K562 (cell line): ENCODE measurements at regions of chr15 and their contacts with region 1.

Region 1: GRCh38 chr15:41557673-41558399 is 1.2 kb upstream of the TYRO3 start:
- DNase-seq: peak; percentile 79 to 84 (median 81)
- ATAC-seq: peak; percentile 77
- H3K4me3 ChIP-seq: peak overlapping the region; percentile 81
- H3K27ac ChIP-seq: 0 out of 3 replicates have a peak overlapping the region, but pooled peaks have one; percentile 12
- H3K4me1 ChIP-seq: peaks cover 38 to 53% of the 10 kb centered on the region in 2 experiments
- H3K27me3 ChIP-seq: no peaks in the 10 kb centered on the region
- CTCF ChIP-seq: peak; percentile 90 to 96 (median 91)
- EP300 ChIP-seq: 0 out of 2 replicates have a peak, but pooled peaks have one; percentile 6
- POLR2A ChIP-seq: no peak
- RAD21 ChIP-seq: peak; percentile 76 to 79

Region 2: GRCh38 chr15:41465822-41466421 is 91.9 kb before region 1 on chr15:
- CTCF ChIA-PET with region 1: no interaction called
- POLR2A ChIA-PET with region 1: interaction called, 6 read pairs
- in situ Hi-C with region 1: no loop called
- intact Hi-C with region 1: loop called (anchors 2 kb)
- DNase-seq: peak; percentile 39 to 69 (median 48)
- ATAC-seq: peak; percentile 89
- H3K4me3 ChIP-seq: no peak overlapping the region
- H3K27ac ChIP-seq: no peak overlapping the region
- H3K4me1 ChIP-seq: no peaks in the 10 kb centered on the region
- H3K27me3 ChIP-seq: no peaks in the 10 kb centered on the region
- CTCF ChIP-seq: peak; percentile 72 to 98 (median 92)
- EP300 ChIP-seq: no peak
- POLR2A ChIP-seq: no peak
- RAD21 ChIP-seq: peak; percentile 90 to 97

Region 3: GRCh38 chr15:41570764-41571163 is 12.9 kb after region 1 on chr15:
- CTCF ChIA-PET with region 1: no interaction called
- POLR2A ChIA-PET with region 1: interaction called, 16 read pairs
- in situ Hi-C with region 1: no loop called
- intact Hi-C with region 1: no loop called
- DNase-seq: no peak
- ATAC-seq: no peak
- H3K4me3 ChIP-seq: no peak overlapping the region
- H3K27ac ChIP-seq: no peak overlapping the region
- H3K4me1 ChIP-seq: peaks cover 30 to 31% of the 10 kb centered on the region in 2 experiments
- H3K27me3 ChIP-seq: no peaks in the 10 kb centered on the region
- CTCF ChIP-seq: no peak
- EP300 ChIP-seq: no peak
- POLR2A ChIP-seq: no peak
- RAD21 ChIP-seq: no peak

Region 4: GRCh38 chr15:41585127-41586047 is 27.6 kb after region 1 on chr15:
- CTCF ChIA-PET with region 1: interaction called, 4 read pairs
- POLR2A ChIA-PET with region 1: interaction called, 3 read pairs
- in situ Hi-C with region 1: no loop called
- intact Hi-C with region 1: loop called (anchors 2 kb)
- DNase-seq: no peak
- ATAC-seq: no peak
- H3K4me3 ChIP-seq: no peak overlapping the region
- H3K27ac ChIP-seq: no peak overlapping the region
- H3K4me1 ChIP-seq: no peaks in the 10 kb centered on the region; a peak in 1 of 5 replicates
- H3K27me3 ChIP-seq: no peaks in the 10 kb centered on the region
- CTCF ChIP-seq: no peak
- EP300 ChIP-seq: no peak
- POLR2A ChIP-seq: no peak
- RAD21 ChIP-seq: no peak

Region 5: GRCh38 chr15:41660235-41661077 is 102.6 kb after region 1 on chr15 and contains the start of gene MGA:
- CTCF ChIA-PET with region 1: no interaction called
- POLR2A ChIA-PET with region 1: interaction called, 4 read pairs
- in situ Hi-C with region 1: no loop called
- intact Hi-C with region 1: loop called (anchors 2 kb)
- DNase-seq: peak; percentile 91 to 97 (median 94)
- ATAC-seq: peak; percentile 92
- H3K4me3 ChIP-seq: peak within 1 kb of the TSS; percentile 51
- H3K27ac ChIP-seq: peak within 1 kb of the TSS; percentile 95
- H3K4me1 ChIP-seq: peaks cover 18 to 26% of the 10 kb centered on the region in 2 experiments
- H3K27me3 ChIP-seq: no peaks in the 10 kb centered on the region
- CTCF ChIP-seq: peak; percentile 45 to 72 (median 56); a peak in 4 of 6 replicates
- EP300 ChIP-seq: peak; percentile 42
- POLR2A ChIP-seq: peak; percentile 84
- RAD21 ChIP-seq: peak; percentile 39 to 49
- polyA plus RNA-seq, gene MGA: 4.7 to 4.8 TPM

Region 6: GRCh38 chr15:41774062-41774881 is 216.4 kb after region 1 on chr15 and contains the start of gene MAPKBP1:
- CTCF ChIA-PET with region 1: no interaction called
- POLR2A ChIA-PET with region 1: no interaction called
- in situ Hi-C with region 1: no loop called
- intact Hi-C with region 1: loop called (anchors 5 kb)
- DNase-seq: peak; percentile 95 to 98 (median 97)
- ATAC-seq: peak; percentile 96
- H3K4me3 ChIP-seq: peak within 1 kb of the TSS; percentile 54
- H3K27ac ChIP-seq: peak within 1 kb of the TSS; percentile 70
- H3K4me1 ChIP-seq: peaks cover 12 to 31% of the 10 kb centered on the region in 2 experiments
- H3K27me3 ChIP-seq: no peaks in the 10 kb centered on the region; a peak in 1 of 5 replicates
- CTCF ChIP-seq: peak; percentile 89 to 99 (median 99)
- EP300 ChIP-seq: 0 out of 2 replicates have a peak, but pooled peaks have one; percentile 4
- POLR2A ChIP-seq: peak; percentile 78; the same call in 1 of the 2 replicates
- RAD21 ChIP-seq: peak; percentile 60 to 78; a peak in 3 of 4 replicates
- polyA plus RNA-seq, gene MAPKBP1: 0.15 to 0.28 TPM

Region 7: DNA sequence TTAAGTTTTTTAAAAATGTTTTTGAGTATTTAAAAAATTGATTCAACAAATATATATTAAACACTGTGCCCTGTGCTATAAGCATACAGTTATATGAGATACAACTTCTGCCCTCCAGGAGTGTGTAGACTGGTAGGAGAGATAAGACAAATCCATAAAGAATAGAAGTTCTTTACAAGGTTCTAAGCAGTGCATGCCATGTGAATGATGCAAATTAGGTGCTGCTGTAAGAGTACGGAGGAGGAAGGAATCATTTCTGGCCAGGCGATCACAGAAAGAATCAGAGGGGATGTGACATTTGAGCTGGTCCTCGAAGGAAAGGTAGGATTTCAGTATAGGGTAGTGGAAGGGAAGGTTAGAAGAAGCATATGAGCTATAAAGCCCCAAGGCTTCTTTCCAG is 230.4 kb after region 1 on chr15:
- CTCF ChIA-PET with region 1: no interaction called
- POLR2A ChIA-PET with region 1: no interaction called
- in situ Hi-C with region 1: no loop called
- intact Hi-C with region 1: no loop called
- DNase-seq: no peak
- ATAC-seq: no peak
- H3K4me3 ChIP-seq: no peak overlapping the region
- H3K27ac ChIP-seq: no peak overlapping the region
- H3K4me1 ChIP-seq: peaks cover 30 to 52% of the 10 kb centered on the region in 2 experiments
- H3K27me3 ChIP-seq: no peaks in the 10 kb centered on the region
- CTCF ChIP-seq: no peak
- EP300 ChIP-seq: no peak
- POLR2A ChIP-seq: no peak
- RAD21 ChIP-seq: no peak